Right cardiac atrium (tissue), 5 donors: ENCODE measurements at regions of chr11 and their contacts with region 1.

Region 1: GRCh38 chr11:10314199-10315072 is 9.6 kb downstream of the ADM start:
- DNase-seq: no peak
- ATAC-seq: peak; percentile 44 to 62
- H3K4me3 ChIP-seq: no peak overlapping the region
- H3K27ac ChIP-seq: no peak overlapping the region
- H3K4me1 ChIP-seq: peaks cover 2% of the 10 kb centered on the region
- H3K27me3 ChIP-seq: no peaks in the 10 kb centered on the region

Region 2: GRCh38 chr11:10366568-10367370 is 52.3 kb after region 1 on chr11:
- intact Hi-C with region 1: loop called in 1 of 4 experiments (anchors 10 kb)
- DNase-seq: peak; percentile 85 to 92 (median 89)
- ATAC-seq: peak; percentile 93 to 97
- H3K4me3 ChIP-seq: no peak overlapping the region
- H3K27ac ChIP-seq: peak overlapping the region; percentile 54
- H3K4me1 ChIP-seq: peaks cover 3% of the 10 kb centered on the region
- H3K27me3 ChIP-seq: no peaks in the 10 kb centered on the region